Ovary (tissue), 10 donors: ENCODE measurements at regions of chr6 and their contacts with region 1.

Region 1: DNA sequence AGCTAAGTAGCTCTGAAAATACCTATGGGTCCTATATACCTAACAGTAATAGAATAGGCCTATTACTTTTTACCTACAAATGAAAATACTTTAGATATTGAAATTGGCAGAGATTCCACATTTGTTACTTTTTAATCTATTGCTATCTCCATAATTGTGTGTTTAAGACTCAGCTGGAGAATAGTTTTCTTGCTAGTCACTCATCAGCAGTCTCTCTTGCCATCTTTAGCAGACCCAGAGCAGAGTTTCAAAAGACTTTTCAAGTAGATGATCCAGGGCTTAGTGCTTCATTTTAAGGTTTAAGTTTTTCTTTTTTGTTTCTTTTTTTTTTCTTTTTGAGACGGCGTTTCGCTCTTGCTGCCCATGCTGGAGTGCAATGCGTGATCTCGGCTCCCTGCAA is 12.9 kb downstream of the ANKS1A start:
- DNase-seq: no peak
- H3K4me3 ChIP-seq: no peak overlapping the region
- H3K27ac ChIP-seq: no peak overlapping the region
- H3K4me1 ChIP-seq: peaks cover 4% of the 10 kb centered on the region
- H3K27me3 ChIP-seq: no peaks in the 10 kb centered on the region
- CTCF ChIP-seq: no peak
- EP300 ChIP-seq: no peak
- POLR2A ChIP-seq: no peak

Region 2: DNA sequence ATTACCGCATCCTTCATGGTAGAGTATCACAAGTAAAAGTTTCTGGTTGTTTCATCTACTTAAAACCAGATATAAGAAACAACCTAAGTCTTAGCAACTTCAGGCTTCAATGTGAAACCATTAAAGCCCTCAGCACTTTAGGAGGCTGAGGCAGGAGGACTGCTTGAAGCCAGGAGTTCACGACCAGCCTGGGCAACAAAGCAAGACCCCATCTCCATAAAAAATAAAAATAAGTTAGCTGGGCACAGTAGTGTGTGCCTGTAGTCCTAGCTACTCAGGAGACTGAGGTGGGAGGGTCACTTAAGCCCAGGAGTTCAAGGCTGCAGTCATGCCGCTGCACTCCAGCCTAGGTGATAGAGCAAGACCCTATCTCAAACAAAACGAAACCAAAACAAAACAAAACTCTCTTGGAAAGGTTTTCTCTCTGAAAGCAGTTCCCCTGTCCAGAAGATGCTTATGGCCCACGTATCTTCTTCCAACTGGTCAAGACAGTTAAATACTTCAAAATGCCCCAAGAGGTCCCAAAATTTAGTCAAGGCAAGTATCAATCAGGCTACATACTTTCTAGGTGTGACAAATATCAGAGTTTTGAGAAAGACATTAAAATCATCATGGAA is 24.0 kb before region 1 on chr6:
- intact Hi-C with region 1: loop called in 1 of 4 experiments (anchors 1 kb)
- DNase-seq: no peak
- H3K4me3 ChIP-seq: no peak overlapping the region
- H3K27ac ChIP-seq: no peak overlapping the region
- H3K4me1 ChIP-seq: no peaks in the 10 kb centered on the region
- H3K27me3 ChIP-seq: no peaks in the 10 kb centered on the region
- CTCF ChIP-seq: no peak
- EP300 ChIP-seq: no peak
- POLR2A ChIP-seq: no peak